ENCODE measurements at regions of chr13 and their contacts with region 1.

Region 1: DNA sequence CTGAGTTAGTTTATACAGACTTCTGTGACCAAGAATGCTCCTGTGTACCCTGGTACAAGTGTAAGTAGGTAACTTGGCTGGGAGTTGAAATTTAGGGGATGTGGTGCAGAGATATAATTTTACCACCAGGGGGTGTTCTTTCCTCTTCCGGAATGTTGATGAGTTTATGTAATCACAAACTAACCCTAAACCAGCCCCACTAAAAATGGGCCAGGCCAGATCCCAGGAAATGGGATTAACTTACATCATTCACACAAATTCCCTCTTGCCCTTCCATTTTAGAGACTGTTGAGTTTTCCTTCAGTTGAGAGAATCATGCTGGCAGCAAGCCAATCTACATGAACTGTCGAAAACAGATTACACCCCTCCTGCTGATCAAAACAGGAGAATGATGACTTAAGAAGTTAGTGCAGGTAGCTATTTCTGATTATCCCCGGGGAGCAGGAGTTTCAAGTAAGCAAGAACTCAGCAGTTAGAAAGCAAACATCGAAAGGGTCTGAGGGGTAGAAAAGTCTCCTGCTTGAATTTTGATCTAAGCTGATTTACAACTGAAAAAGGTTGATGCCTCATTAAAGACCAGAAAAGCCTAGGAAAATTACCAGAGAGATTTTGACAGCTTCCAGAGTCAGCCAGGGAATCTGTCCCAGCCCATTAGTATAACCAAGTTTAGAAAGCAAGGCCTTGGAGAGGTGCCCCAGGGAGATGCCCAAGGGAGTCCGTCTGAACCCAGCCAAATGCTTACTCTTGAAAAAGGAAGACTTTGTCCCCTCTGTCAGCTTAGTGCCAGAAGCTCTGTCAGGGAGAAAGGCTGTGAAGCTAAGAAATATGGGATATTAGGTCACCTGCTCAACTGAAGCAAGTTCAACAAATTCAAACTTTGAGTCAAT is 32.3 kb upstream of the MED4 start:
- DNase-seq: peak; percentile 50 to 61 (median 54)
- ATAC-seq: peak; percentile 90
- H3K4me3 ChIP-seq: no peak overlapping the region
- H3K27ac ChIP-seq: no peak overlapping the region
- H3K4me1 ChIP-seq: peaks cover 0 to 4% of the 10 kb centered on the region in 2 experiments; a peak in 1 of 5 replicates
- H3K27me3 ChIP-seq: no peaks in the 10 kb centered on the region
- CTCF ChIP-seq: peak; percentile 45 to 74 (median 60)
- EP300 ChIP-seq: no peak
- POLR2A ChIP-seq: no peak
- RAD21 ChIP-seq: peak; percentile 85 to 89

Region 2: DNA sequence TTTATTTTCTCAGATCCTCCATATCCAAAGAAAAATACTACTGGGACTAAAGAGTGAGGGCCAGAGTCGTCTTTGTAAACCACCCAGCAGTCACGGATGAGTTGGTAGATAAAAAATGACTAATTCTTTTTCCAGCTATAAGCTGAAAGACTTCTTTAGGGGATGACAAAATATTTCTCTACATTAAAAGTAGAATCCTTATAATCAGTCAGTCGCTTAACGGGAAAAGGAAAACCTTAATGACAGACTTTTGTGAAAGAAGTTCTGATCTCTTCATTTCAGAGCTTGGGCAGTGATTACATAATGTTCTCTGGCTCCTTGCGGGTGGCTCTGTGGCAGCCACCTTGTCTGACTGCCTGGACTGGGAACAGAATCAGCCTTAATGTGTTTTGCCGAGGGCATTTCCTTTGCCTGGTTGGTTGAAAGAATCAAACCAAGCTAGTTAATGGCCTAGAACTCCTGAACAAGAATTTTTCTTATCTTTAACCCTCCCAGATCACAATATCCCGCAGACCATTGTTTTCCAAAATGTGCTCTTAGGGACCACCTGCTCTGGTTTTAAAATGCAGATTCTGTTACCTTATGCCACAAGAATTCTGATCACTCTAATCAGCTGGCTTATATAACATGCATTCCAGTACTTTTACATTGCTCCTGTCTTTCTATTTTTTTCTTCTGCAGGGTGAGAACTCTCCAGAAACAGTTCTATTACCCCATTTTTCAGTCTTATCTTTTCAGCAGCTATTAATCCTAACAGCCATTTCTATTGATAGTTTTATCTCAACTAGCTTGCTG is 108.4 kb after region 1 on chr13:
- CTCF ChIA-PET with region 1: no interaction called
- POLR2A ChIA-PET with region 1: no interaction called
- in situ Hi-C with region 1: no loop called
- intact Hi-C with region 1: loop called (anchors 2 kb)
- DNase-seq: no peak
- ATAC-seq: no peak
- H3K4me3 ChIP-seq: peak overlapping the region; percentile 12; the same call in 1 of the 2 replicates
- H3K27ac ChIP-seq: peak overlapping the region; percentile 35; the same call in 1 of the 3 replicates
- H3K4me1 ChIP-seq: peaks cover 0 to 15% of the 10 kb centered on the region in 2 experiments; a peak in 3 of 5 replicates
- H3K27me3 ChIP-seq: no peaks in the 10 kb centered on the region
- CTCF ChIP-seq: no peak
- EP300 ChIP-seq: no peak
- POLR2A ChIP-seq: no peak
- RAD21 ChIP-seq: no peak

Region 3: DNA sequence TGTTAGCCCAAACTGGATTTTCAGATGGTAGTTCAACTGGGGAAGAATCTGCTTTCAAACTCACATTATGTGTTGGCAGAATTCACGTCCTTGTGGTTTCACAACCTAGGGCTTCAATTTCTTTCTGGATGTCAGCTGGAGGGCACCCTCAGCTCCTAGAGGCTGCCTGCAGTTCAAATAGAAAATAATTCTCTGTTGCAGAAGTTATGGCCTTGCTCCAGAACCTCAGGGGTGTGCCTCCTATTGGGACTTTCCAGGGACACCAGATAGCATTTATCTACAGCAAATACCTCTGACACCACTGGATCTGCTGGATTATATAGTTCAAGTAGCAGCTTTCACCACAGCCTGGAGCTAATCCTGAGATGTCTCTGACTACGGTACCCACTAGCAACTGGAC is 164.5 kb after region 1 on chr13:
- CTCF ChIA-PET with region 1: no interaction called
- POLR2A ChIA-PET with region 1: no interaction called
- in situ Hi-C with region 1: no loop called
- intact Hi-C with region 1: loop called (anchors 10 kb)
- DNase-seq: no peak
- ATAC-seq: no peak
- H3K4me3 ChIP-seq: no peak overlapping the region
- H3K27ac ChIP-seq: no peak overlapping the region
- H3K4me1 ChIP-seq: no peaks in the 10 kb centered on the region
- H3K27me3 ChIP-seq: no peaks in the 10 kb centered on the region
- CTCF ChIP-seq: no peak
- EP300 ChIP-seq: no peak
- POLR2A ChIP-seq: no peak
- RAD21 ChIP-seq: no peak